ENCODE measurements at regions of chr6 and their contacts with region 1.

Region 1: DNA sequence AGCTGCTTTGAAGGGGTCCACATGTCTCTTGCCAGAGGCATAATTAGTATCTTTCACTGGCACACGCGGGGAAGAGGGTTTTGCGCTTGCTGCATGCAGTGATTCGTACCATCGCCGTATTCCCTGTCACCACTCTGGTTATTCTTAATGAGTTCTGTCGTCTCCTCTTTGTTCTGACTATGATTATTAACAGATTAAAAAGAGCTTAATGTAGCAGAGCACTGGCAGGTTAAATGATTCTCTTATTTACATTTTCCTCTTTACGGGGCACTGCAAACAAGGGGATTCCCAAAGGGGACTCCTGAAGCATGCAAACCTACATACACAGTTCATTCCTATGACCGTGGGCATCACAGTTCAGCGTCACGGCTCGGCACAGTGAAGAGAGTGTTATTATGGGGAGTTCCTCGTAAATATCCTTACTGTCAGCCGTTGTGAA is 204.8 kb downstream of the DTNBP1 start:
- DNase-seq: peak; percentile 79
- ATAC-seq: peak; percentile 91
- H3K4me3 ChIP-seq: peak overlapping the region in 2 of 5 experiments; percentile 2 to 20
- H3K4me3 Mint-ChIP-seq: peak overlapping the region; percentile 71
- H3K27ac ChIP-seq: peak overlapping the region; percentile 30 to 70
- H3K27ac Mint-ChIP-seq: peak overlapping the region; percentile 78
- H3K4me1 ChIP-seq: peaks cover 29 to 40% of the 10 kb centered on the region in 2 donors
- H3K4me1 Mint-ChIP-seq: peaks cover 73% of the 10 kb centered on the region
- H3K27me3 ChIP-seq: no peaks in the 10 kb centered on the region
- H3K27me3 Mint-ChIP-seq: no peaks in the 10 kb centered on the region
- CTCF ChIP-seq: no peak

Region 2: DNA sequence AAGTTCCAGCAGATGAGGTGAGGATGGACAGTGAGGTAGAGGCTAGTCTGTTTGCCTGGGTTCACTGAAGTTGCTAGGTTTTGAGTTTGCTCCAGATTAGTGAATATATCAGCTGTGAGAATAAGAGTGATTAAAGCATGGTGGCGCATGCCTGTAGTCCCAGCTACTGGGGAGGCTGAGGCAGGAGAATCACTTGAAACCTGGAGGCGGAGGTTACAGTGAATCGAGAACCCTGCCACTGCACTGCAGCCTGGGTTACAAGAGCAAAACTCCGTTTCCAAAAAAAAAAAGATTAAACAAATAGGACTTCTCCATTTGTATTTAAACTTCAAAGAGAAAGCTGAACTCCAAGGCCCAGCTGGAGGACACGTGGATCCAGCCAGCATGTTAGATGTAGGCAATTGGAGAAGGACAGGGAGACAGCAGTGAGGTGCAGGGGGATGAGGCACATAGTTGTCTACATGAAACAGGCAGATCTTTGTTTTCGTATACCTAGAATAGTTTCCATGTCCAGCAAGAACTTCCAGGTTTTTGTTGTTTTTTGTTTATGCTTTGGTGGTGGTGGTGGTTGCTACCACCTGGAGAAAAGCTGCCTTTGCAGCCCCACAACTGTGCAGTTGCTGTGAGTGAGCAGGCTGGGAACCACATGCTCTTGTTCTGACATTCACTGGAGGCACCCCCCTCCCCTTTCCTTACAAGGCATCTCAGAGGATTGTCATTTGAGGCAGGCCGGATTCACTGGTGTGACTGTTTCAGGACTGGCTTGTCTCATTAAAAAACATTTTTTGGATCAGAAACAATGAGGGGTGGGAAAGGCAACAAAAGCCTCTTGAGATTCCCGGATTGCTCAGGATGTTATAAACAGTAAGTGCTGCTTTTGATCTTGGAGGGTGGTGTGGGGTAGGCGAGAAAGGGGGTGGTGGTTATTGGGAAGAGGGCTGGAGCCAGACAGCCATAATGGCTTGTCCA is 139.8 kb before region 1 on chr6:
- CTCF ChIA-PET with region 1: no interaction called
- POLR2A ChIA-PET with region 1: interaction called, 12 read pairs
- intact Hi-C with region 1: no loop called
- DNase-seq: no peak
- ATAC-seq: no peak
- H3K4me3 ChIP-seq: no peak overlapping the region
- H3K4me3 Mint-ChIP-seq: no peak overlapping the region
- H3K27ac ChIP-seq: no peak overlapping the region
- H3K27ac Mint-ChIP-seq: no peak overlapping the region
- H3K4me1 ChIP-seq: peaks cover 44 to 51% of the 10 kb centered on the region in 2 donors
- H3K4me1 Mint-ChIP-seq: peaks cover 87% of the 10 kb centered on the region
- H3K27me3 ChIP-seq: no peaks in the 10 kb centered on the region
- H3K27me3 Mint-ChIP-seq: no peaks in the 10 kb centered on the region
- CTCF ChIP-seq: no peak

Measured in B cell (primary cell).